ENCODE measurements at regions of chr14 and their contacts with region 1.

Region 1: DNA sequence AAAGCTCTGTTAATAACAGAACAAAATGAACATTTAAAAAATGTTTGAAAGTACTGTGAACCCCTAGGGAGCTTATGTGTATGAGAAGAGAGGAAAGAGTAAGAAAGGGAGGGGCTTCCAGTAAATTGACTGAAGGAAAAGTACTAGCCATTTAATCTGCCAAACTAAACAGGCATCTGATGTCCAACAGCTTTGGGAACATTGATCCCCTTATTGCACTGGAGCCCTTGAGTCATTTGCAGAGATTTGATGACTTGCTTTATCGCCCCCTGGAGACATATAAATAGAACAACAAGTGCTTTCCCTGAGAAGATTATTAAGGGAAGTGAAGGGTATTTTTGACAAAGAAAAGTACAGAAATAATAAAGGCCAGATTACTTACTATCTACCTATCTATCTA is 319.3 kb upstream of the NOVA1 start:
- DNase-seq: no peak
- ATAC-seq: peak; percentile 71 to 92 (median 82)
- H3K4me3 ChIP-seq: no peak overlapping the region
- H3K27ac ChIP-seq: peak overlapping the region in 5 of 12 donors; percentile 5 to 49 (median 44)
- H3K4me1 ChIP-seq: no peaks in the 10 kb centered on the region
- H3K27me3 ChIP-seq: no peaks in the 10 kb centered on the region
- CTCF ChIP-seq: peak in 9 of 12 donors; percentile 6 to 56 (median 31)
- POLR2A ChIP-seq: no peak

Region 2: DNA sequence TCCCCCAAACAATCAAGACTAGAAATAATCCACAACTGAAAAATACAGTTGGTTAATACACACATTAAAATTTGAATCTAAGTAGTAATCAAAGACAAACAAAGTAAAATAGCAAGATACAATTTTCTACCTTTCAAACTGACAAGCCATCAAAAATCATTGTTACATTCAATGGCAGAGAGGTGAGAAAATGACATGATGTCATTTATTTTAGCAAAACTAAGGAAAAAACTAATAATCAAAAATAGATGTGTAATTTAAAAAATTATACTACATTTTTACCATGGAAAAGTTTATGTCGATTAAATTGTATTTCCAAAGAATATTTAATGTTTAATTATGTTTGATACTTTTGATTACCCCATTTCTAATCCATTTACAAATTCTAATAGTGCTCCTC is 378.9 kb before region 1 on chr14:
- intact Hi-C with region 1: no loop called
- DNase-seq: no peak
- ATAC-seq: no peak
- H3K4me3 ChIP-seq: no peak overlapping the region
- H3K27ac ChIP-seq: no peak overlapping the region
- H3K4me1 ChIP-seq: no peaks in the 10 kb centered on the region
- H3K27me3 ChIP-seq: no peaks in the 10 kb centered on the region
- CTCF ChIP-seq: no peak
- POLR2A ChIP-seq: no peak

Region 3: DNA sequence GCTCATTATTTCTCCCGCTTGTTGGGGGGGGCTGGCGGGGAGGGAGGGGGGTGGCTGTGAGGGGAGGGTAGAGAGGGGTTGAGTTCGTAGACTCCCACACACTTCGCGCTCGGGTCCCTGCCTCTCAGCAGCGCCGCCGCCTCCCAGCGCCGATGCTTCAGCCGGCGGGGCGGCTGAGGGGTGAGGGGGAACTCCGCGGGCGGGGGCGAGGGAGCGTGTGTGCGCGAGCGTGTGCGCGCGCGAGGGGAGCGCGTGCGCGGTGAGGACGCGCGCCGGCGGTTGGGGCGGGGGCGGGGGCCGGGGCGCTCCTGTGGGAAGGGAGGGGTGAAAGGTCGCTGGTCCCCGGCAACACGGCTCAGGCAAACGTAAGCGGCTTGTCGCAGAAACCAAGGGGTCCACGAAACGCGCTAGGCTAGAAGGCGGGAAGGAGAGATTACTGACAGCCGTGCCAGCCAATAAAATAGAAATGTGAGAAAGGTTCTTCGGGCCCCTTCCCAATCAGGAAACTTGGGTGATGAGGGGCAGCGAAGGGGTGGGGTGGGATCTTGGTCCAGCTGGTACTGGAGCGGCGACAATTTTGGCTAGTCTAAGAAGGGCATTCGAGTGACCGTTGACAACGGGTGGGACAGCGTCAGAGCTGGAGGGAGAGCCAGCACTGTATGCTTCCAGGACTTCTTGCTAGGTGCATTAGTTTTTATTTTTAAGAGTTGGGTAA is 318.8 kb before region 1 on chr14:
- intact Hi-C with region 1: loop called in 2 of 10 experiments (anchors 2 to 5 kb)
- DNase-seq: peak; percentile 74 to 87 (median 80)
- ATAC-seq: peak; percentile 79 to 94 (median 94)
- H3K4me3 ChIP-seq: peak overlapping the region; percentile 32 to 83 (median 64)
- H3K27ac ChIP-seq: peak overlapping the region in 11 of 12 donors; percentile 56 to 91 (median 76)
- H3K4me1 ChIP-seq: no peaks in the 10 kb centered on the region
- H3K27me3 ChIP-seq: peaks cover 0 to 20% (median 0%) of the 10 kb centered on the region in 9 donors
- CTCF ChIP-seq: no peak
- POLR2A ChIP-seq: peak in 1 of 2 donors; percentile 11

Measured in heart left ventricle (tissue), 16 donors.